Endothelial cell of umbilical vein (primary cell): ENCODE measurements at regions of chr5 and their contacts with region 1.

Region 1: GRCh38 chr5:172006321-172007174 is at the start of gene FBXW11:
- DNase-seq: peak; percentile 95
- H3K4me3 ChIP-seq: peak within 1 kb of the TSS; percentile 66 to 98 (median 88)
- H3K27ac ChIP-seq: peak within 1 kb of the TSS; percentile 78
- H3K4me1 ChIP-seq: peaks cover 44% of the 10 kb centered on the region
- H3K27me3 ChIP-seq: no peaks in the 10 kb centered on the region
- CTCF ChIP-seq: no peak
- POLR2A ChIP-seq: peak; percentile 96
- total RNA-seq, gene FBXW11: 42.3 and 44.7 TPM in 2 replicates

Region 2: GRCh38 chr5:171984748-171985419 is 21.7 kb before region 1 on chr5:
- CTCF ChIA-PET with region 1: interaction called, 8 read pairs
- POLR2A ChIA-PET with region 1: interaction called, 9 read pairs
- dilution Hi-C with region 1: no loop called
- intact Hi-C with region 1: loop called (anchors 2 kb)
- DNase-seq: peak; percentile 63
- H3K4me3 ChIP-seq: no peak overlapping the region
- H3K27ac ChIP-seq: peak overlapping the region; percentile 6
- H3K4me1 ChIP-seq: peaks cover 11% of the 10 kb centered on the region
- H3K27me3 ChIP-seq: no peaks in the 10 kb centered on the region
- CTCF ChIP-seq: no peak
- POLR2A ChIP-seq: no peak

Region 3: DNA sequence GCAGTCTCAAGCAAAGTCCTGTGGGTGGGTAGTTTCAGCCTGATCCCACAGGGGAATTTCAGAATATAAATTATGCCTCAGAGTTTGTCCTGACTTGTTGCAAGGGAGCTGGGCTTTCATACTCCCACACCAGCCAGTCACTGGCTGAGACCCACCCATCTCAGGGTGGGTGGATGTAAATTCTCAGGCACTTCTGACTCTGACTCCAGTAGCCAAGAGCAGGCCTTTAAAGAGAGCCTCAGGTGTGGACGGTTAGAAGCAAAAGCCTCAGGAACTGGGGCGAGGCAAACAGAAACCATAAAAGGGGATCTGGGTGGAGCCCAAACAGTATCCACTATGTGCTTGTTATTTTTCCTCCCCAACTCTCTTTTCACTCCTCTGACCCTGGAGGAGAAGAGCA is 28.5 kb after region 1 on chr5:
- CTCF ChIA-PET with region 1: interaction called, 7 read pairs
- POLR2A ChIA-PET with region 1: no interaction called
- dilution Hi-C with region 1: no loop called
- intact Hi-C with region 1: loop called (anchors 1 kb)
- DNase-seq: no peak
- H3K4me3 ChIP-seq: no peak overlapping the region
- H3K27ac ChIP-seq: no peak overlapping the region
- H3K4me1 ChIP-seq: no peaks in the 10 kb centered on the region
- H3K27me3 ChIP-seq: peaks cover 5 to 12% of the 10 kb centered on the region in 2 experiments
- CTCF ChIP-seq: no peak
- POLR2A ChIP-seq: no peak

Region 4: DNA sequence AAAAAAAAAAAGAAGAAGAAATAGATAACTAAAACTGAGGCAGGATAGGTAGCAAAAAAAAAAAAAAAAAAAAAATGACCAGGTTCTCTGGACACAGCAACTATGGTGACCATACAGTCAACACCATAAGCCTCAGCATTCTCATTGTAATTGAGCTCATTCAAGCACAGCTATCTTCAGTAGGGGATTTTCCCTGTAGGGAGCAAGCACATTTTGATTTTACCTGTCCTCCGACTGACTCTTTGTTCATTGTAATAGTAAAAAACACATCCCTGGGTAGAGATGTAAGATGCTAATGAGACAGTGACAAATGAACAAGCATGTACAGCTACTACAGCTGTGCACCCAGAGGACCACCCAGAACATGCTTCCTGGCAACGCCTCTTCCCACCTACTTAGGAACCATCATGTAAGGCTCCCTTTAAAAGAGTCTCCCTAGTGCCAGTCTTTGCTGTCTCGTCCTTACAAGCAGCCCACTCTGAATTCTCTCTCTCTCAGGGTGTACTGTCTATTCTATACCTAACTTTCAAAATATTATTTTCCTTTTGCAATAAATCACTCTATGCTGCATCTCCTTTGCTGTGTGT is 64.8 kb after region 1 on chr5:
- CTCF ChIA-PET with region 1: no interaction called
- POLR2A ChIA-PET with region 1: no interaction called
- dilution Hi-C with region 1: no loop called
- intact Hi-C with region 1: no loop called
- DNase-seq: no peak
- H3K4me3 ChIP-seq: no peak overlapping the region
- H3K27ac ChIP-seq: no peak overlapping the region
- H3K4me1 ChIP-seq: no peaks in the 10 kb centered on the region
- H3K27me3 ChIP-seq: no peaks in the 10 kb centered on the region
- CTCF ChIP-seq: no peak
- POLR2A ChIP-seq: no peak

Region 5: DNA sequence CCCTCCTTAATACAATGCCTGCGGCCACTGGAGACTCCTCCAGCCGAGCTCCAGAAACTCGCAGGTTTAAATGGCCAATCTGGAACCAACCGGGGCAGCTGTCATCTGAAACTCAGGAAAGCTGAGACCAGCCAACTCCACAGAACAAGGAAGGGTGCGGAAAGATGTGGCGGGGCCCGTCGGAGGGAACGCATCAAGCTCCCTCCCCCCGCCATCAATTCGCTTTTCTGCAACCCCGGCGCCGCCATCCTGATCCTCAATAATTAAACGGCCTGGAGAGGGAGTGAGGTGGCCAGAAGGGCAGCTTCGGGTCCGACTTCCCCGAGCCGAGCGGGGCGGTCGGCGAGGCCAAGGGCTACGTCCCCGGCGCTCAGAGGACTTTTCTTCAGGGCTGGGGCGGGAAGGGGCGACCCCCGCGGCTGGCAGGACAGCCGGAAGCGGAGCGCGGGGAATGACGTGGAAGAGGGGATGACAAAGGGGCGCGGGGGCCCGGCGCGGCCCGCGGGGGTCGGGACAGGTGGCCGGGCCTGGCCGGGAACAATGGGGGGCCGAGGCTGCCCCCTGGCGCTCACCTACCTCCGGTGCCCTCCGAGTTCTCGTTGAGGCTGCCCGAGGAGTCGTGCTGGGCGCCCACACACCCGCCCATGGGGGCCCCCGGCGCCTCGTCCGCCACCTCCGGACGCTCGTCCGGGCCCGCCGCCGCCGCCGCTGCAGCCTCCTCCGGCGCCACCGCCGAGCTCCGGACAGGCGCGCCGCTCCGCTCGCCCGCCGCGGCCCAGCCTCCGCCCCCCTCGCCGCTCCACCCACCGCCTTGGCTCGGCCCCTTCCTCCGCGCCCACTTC is 276.7 kb after region 1 on chr5 and contains the start of gene UBTD2:
- CTCF ChIA-PET with region 1: interaction called, 7 read pairs
- POLR2A ChIA-PET with region 1: no interaction called
- dilution Hi-C with region 1: no loop called
- intact Hi-C with region 1: loop called (anchors 5 kb)
- DNase-seq: peak; percentile 79
- H3K4me3 ChIP-seq: peak within 1 kb of the TSS; percentile 73 to 93 (median 92)
- H3K27ac ChIP-seq: peak within 1 kb of the TSS; percentile 82
- H3K4me1 ChIP-seq: peaks cover 21% of the 10 kb centered on the region
- H3K27me3 ChIP-seq: no peaks in the 10 kb centered on the region
- CTCF ChIP-seq: peak; percentile 35 to 65
- POLR2A ChIP-seq: peak; percentile 84
- total RNA-seq, gene UBTD2: 21.6 and 22.6 TPM in 2 replicates